ENCODE measurements at regions of chr4 and their contacts with region 1.

Region 1: GRCh38 chr4:87498446-87498900 is 30.7 kb downstream of the SPARCL1 start:
- DNase-seq: no peak
- H3K4me3 Mint-ChIP-seq: no peak overlapping the region
- H3K27ac Mint-ChIP-seq: no peak overlapping the region
- H3K4me1 Mint-ChIP-seq: peaks cover 21% of the 10 kb centered on the region
- H3K27me3 Mint-ChIP-seq: no peaks in the 10 kb centered on the region

Region 2: GRCh38 chr4:87521757-87522374 is 23.4 kb after region 1 on chr4:
- CTCF ChIA-PET with region 1: no interaction called
- POLR2A ChIA-PET with region 1: no interaction called
- intact Hi-C with region 1: no loop called
- DNase-seq: no peak
- H3K4me3 Mint-ChIP-seq: no peak overlapping the region
- H3K27ac Mint-ChIP-seq: no peak overlapping the region
- H3K4me1 Mint-ChIP-seq: no peaks in the 10 kb centered on the region
- H3K27me3 Mint-ChIP-seq: no peaks in the 10 kb centered on the region

Region 3: DNA sequence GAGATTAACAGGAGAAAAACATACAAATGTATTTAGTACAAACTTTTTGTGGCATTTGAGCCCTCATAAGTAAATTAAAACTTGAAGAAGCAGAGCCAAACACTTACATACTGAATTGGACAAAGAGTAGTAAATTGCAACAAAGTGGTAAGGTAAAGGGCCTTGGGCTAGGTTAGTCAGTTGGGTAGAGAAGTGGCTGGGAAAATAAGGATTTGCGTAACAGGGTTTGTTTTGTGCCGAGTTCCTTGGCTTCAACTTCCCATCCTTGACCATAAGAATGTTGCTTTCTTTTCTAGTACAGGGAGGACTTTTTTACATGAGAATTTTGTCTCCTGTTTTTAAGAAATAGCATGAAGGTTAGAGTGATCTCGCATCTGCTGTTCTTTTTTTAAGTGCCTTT is 76.5 kb after region 1 on chr4:
- CTCF ChIA-PET with region 1: no interaction called
- POLR2A ChIA-PET with region 1: no interaction called
- intact Hi-C with region 1: loop called (anchors 5 kb)
- DNase-seq: no peak
- H3K4me3 Mint-ChIP-seq: no peak overlapping the region
- H3K27ac Mint-ChIP-seq: no peak overlapping the region
- H3K4me1 Mint-ChIP-seq: no peaks in the 10 kb centered on the region
- H3K27me3 Mint-ChIP-seq: peaks cover 3% of the 10 kb centered on the region

Region 4: DNA sequence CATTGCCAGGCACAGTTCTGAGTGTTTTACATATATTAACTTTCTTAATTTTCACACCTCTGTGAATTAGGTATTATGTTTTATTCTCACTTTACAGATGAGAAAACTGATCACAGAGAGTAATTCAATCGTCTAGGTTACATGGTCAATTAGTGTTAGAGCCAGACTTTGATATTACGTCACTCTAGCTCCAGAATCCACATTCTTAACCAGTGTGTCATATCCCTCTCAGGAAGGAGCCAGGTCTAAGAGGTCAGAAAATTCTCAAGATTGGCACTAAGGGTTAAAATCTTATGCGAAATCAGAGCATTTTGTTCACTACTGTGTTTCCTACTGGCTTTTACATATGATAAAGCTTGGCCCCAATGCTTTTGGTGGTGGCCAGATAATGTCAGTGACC is 159.1 kb after region 1 on chr4:
- CTCF ChIA-PET with region 1: no interaction called
- POLR2A ChIA-PET with region 1: no interaction called
- intact Hi-C with region 1: no loop called
- DNase-seq: no peak
- H3K4me3 Mint-ChIP-seq: no peak overlapping the region
- H3K27ac Mint-ChIP-seq: no peak overlapping the region
- H3K4me1 Mint-ChIP-seq: no peaks in the 10 kb centered on the region
- H3K27me3 Mint-ChIP-seq: peaks cover 9% of the 10 kb centered on the region

Measured in activated CD4-positive, alpha-beta memory T cell treated with anti-CD3 and anti-CD28 coated beads for 36 hours (primary cell).